Stomach (tissue), 19 donors: ENCODE measurements at regions of chr6 and their contacts with region 1.

Region 1: DNA sequence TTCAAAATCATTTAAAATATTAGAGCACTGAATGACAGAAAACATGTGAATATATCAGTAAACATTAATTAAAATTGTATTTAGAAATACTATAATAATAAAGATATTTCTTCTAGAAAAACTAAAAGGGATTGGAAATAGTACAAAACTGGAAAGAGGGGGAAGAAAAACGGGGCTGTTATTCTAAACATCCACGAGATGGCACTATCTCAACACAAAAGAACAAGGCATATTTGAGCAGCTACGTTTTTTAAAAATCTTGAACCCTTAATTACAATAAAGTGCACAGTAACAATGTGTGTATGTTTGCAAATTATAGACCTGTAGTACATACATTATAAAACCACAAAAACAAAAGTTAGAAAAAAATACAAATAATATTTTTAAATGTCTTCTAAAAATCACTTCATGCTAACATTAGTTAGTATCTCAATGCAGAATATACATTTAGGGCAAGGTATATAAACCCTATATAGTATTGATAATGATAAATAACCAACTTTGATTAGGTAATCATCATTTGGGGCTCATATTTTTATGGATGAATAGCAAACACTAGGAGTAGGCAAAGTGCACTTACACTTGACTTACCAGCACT is 42.5 kb upstream of the PNISR start:
- DNase-seq: peak in 1 of 2 donors; percentile 46
- H3K4me3 ChIP-seq: no peak overlapping the region
- H3K27ac ChIP-seq: no peak overlapping the region
- H3K4me1 ChIP-seq: no peaks in the 10 kb centered on the region
- H3K27me3 ChIP-seq: no peaks in the 10 kb centered on the region
- CTCF ChIP-seq: peak in 4 of 7 experiments; percentile 34 to 63 (median 38)
- EP300 ChIP-seq: no peak
- POLR2A ChIP-seq: no peak

Region 2: DNA sequence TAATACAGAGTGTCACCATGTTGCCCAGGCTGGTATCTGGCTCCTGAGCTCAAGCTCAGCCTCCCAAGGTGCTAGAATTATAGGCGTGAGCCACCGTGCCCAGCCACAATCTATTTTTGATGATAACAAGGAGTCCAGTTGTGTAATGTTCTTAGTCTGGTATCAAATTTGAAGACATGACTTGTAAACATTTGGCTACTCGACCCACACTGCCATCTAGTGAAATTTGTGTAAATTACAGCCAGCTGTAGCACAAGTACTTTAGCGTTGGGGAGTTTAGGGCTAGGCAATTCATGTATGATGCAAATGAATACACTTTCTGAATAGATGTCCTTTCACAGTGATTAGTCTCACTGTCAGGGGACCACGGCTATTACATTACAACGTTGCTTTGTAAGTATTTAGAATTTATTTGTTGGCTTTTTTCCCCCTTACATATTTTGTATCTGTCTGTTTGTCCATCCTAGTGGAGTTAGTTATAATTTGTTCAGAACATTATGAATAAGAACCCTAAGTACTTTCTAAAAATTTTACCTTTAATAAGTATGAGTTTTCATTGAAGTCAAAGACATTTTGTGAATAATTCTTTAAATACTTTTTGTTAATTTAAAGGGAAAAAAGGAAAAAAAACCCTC is 278.8 kb after region 1 on chr6:
- intact Hi-C with region 1: loop called (anchors 10 kb)
- DNase-seq: peak; percentile 65 to 84
- H3K4me3 ChIP-seq: no peak overlapping the region
- H3K27ac ChIP-seq: no peak overlapping the region
- H3K4me1 ChIP-seq: no peaks in the 10 kb centered on the region
- H3K27me3 ChIP-seq: peaks cover 0 to 8% (median 4%) of the 10 kb centered on the region in 3 donors
- CTCF ChIP-seq: peak in 5 of 7 experiments; percentile 83 to 89 (median 85)
- EP300 ChIP-seq: no peak
- POLR2A ChIP-seq: no peak